Activated CD4-positive, alpha-beta T cell treated with anti-CD3 and anti-CD28 coated beads for 36 hours (primary cell): ENCODE measurements at regions of chr16 and their contacts with region 1.

Region 1: GRCh38 chr16:19474617-19475016 is 47.3 kb downstream of the GDE1 start:
- DNase-seq: no peak
- ATAC-seq: no peak
- H3K4me3 Mint-ChIP-seq: no peak overlapping the region
- H3K27ac Mint-ChIP-seq: no peak overlapping the region
- H3K4me1 Mint-ChIP-seq: no peaks in the 10 kb centered on the region
- H3K27me3 Mint-ChIP-seq: peaks cover 9% of the 10 kb centered on the region

Region 2: GRCh38 chr16:19252904-19253303 is 221.7 kb before region 1 on chr16:
- CTCF ChIA-PET with region 1: no interaction called
- POLR2A ChIA-PET with region 1: no interaction called
- intact Hi-C with region 1: no loop called
- DNase-seq: no peak
- ATAC-seq: no peak
- H3K4me3 Mint-ChIP-seq: no peak overlapping the region
- H3K27ac Mint-ChIP-seq: no peak overlapping the region
- H3K4me1 Mint-ChIP-seq: no peaks in the 10 kb centered on the region
- H3K27me3 Mint-ChIP-seq: peaks cover 14% of the 10 kb centered on the region

Region 3: GRCh38 chr16:19437280-19437679 is 37.3 kb before region 1 on chr16:
- CTCF ChIA-PET with region 1: no interaction called
- POLR2A ChIA-PET with region 1: no interaction called
- intact Hi-C with region 1: no loop called
- DNase-seq: no peak
- ATAC-seq: no peak
- H3K4me3 Mint-ChIP-seq: no peak overlapping the region
- H3K27ac Mint-ChIP-seq: no peak overlapping the region
- H3K4me1 Mint-ChIP-seq: peaks cover 2% of the 10 kb centered on the region
- H3K27me3 Mint-ChIP-seq: peaks cover 6% of the 10 kb centered on the region

Region 4: DNA sequence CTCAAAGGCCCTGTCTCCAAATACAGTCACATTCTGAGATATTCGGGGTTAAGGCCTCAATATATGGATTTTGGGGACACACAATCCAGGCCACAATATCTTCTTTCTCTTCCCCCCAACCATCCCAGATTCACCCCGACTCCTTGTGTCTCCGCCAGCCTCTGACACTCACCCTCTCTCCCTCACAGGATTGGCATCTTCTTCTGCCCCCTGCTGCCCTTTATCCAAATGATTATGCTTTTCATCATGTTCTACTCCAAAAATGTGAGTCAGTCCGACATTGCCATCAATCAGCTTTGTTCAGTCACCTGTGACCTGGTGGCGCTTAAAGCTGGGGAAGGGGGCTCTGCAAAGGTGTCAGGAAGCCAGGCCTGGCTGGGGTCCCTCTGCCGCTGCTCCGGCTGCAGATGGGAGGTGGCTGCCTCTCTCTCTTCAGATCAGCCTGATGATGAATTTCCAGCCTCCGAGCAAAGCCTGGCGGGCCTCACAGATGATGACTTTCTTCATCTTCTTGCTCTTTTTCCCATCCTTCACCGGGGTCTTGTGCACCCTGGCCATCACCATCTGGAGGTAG is 12.2 kb after region 1 on chr16:
- CTCF ChIA-PET with region 1: no interaction called
- POLR2A ChIA-PET with region 1: no interaction called
- intact Hi-C with region 1: loop called in 1 of 2 experiments (anchors 1 kb)
- DNase-seq: no peak
- ATAC-seq: no peak
- H3K4me3 Mint-ChIP-seq: no peak overlapping the region
- H3K27ac Mint-ChIP-seq: no peak overlapping the region
- H3K4me1 Mint-ChIP-seq: no peaks in the 10 kb centered on the region
- H3K27me3 Mint-ChIP-seq: no peaks in the 10 kb centered on the region